ENCODE measurements at regions of chr6 and their contacts with region 1.

Region 1: DNA sequence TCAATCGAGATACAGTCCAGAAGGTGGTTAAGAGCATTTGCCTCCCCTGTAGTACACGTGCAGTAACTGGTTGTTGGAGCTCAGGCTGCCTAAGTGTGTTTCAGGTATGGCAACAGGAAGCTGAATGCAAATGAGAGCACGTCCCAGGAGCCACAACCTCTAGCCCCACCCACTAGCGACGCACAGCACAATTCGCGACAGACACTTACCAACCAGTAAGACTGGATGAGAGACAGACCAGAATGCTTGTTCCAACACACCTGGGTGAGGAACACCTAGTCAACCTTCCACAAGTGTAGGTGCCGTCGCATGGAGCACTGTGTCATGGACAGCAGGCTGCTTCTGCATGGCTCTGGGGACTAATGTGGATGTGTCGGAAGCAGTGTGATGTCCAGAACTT is 7.2 kb upstream of the SERPINB1 start:
- DNase-seq: peak; percentile 79
- H3K4me3 Mint-ChIP-seq: peak overlapping the region; percentile 28
- H3K27ac Mint-ChIP-seq: peak overlapping the region; percentile 84
- H3K4me1 Mint-ChIP-seq: peaks cover 50% of the 10 kb centered on the region
- H3K27me3 Mint-ChIP-seq: no peaks in the 10 kb centered on the region

Region 2: GRCh38 chr6:2866181-2866846 is 17.5 kb after region 1 on chr6:
- CTCF ChIA-PET with region 1: interaction called, 11 read pairs
- POLR2A ChIA-PET with region 1: no interaction called
- DNase-seq: no peak
- H3K4me3 Mint-ChIP-seq: no peak overlapping the region
- H3K27ac Mint-ChIP-seq: no peak overlapping the region
- H3K4me1 Mint-ChIP-seq: peaks cover 61% of the 10 kb centered on the region
- H3K27me3 Mint-ChIP-seq: no peaks in the 10 kb centered on the region

Region 3: DNA sequence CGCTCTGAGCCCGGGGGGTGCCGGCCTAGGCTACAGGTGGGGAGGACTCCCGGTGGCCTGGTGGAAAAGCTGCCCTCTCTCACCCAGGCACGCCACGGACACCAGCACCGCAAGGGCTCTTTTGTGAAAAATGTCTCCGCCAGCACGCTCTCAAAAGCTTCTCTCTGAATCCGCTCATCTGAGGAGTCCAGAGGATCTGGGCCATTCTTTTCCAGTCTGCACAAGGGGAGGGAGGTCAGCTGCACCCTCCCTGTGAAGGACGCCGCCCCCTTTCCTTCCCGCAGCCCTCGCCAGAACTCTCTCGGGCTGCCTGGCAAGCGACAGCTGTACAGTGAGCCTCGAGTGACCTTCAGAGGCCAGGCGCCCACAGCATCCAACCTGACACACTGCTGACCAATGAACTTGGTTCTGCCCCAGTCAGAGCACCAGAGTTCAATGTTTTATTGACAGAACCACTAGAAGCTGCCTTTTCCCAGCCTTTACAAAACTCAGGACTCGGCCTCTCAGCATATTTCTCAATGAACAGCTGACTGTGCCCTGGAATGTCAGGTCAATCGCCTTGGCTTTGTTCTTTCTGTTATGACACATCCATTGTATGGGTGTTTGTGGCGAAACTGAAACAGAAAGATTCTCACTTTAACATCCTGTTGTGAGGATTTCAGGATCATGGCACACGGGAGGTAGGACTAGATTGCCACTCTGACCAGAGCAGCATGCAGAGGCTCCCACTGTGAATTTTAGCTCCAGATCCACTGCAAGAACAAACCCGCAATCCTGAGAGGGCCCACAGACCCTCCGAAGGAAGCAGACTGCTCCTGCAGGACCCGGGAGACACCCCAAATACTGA is 27.6 kb after region 1 on chr6:
- CTCF ChIA-PET with region 1: interaction called, 10 read pairs
- POLR2A ChIA-PET with region 1: interaction called, 4 read pairs
- DNase-seq: no peak
- H3K4me3 Mint-ChIP-seq: peak overlapping the region; percentile 75
- H3K27ac Mint-ChIP-seq: peak overlapping the region; percentile 96
- H3K4me1 Mint-ChIP-seq: peaks cover 77% of the 10 kb centered on the region
- H3K27me3 Mint-ChIP-seq: no peaks in the 10 kb centered on the region

Region 4: DNA sequence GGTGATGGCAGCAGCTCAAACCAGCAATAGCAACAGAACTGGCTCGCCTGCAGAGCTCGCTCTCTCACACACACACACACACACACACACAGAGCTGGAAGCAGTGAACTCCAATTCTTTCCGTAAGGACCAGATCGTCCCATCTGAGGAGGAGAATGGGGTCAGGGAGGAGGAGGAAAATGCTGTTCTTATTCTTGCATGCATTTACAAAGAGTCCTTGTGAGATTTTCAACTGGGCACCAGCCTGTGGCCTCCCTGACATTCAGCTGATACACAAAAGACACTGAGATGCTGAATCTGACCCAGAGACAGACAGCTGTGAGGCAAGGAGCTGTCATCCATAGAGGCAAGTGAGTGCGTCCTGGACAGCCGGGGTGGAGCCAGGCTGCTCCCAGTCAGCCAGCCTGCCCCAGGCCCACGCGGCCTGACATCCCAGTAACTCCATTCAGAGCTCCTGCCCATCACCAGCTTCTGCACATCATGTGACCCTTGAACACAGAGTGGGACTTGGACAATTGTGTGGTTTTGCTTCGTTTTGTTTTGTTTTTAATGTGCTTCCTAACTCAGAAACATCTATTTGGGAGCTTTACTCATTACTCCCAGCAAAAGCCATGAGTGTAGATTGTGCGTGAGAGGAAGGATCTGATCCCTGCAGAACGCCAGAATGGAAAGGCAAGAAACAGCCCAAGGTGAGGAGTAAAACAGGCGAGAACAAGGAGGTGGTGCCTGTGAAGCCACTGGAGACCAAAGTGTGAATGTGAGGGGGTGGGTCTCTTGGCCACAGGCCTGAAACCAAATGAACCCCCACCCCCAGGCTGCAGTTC is 52.2 kb after region 1 on chr6:
- CTCF ChIA-PET with region 1: interaction called, 13 read pairs
- POLR2A ChIA-PET with region 1: no interaction called
- DNase-seq: no peak
- H3K4me3 Mint-ChIP-seq: peak overlapping the region; percentile 99
- H3K27ac Mint-ChIP-seq: peak overlapping the region; percentile 64
- H3K4me1 Mint-ChIP-seq: peaks cover 59% of the 10 kb centered on the region
- H3K27me3 Mint-ChIP-seq: peaks cover 2% of the 10 kb centered on the region

Region 5: GRCh38 chr6:2911171-2911570 is 62.3 kb after region 1 on chr6:
- CTCF ChIA-PET with region 1: interaction called, 10 read pairs
- POLR2A ChIA-PET with region 1: no interaction called
- DNase-seq: no peak
- H3K4me3 Mint-ChIP-seq: no peak overlapping the region
- H3K27ac Mint-ChIP-seq: no peak overlapping the region
- H3K4me1 Mint-ChIP-seq: peaks cover 39% of the 10 kb centered on the region
- H3K27me3 Mint-ChIP-seq: no peaks in the 10 kb centered on the region

Region 6: DNA sequence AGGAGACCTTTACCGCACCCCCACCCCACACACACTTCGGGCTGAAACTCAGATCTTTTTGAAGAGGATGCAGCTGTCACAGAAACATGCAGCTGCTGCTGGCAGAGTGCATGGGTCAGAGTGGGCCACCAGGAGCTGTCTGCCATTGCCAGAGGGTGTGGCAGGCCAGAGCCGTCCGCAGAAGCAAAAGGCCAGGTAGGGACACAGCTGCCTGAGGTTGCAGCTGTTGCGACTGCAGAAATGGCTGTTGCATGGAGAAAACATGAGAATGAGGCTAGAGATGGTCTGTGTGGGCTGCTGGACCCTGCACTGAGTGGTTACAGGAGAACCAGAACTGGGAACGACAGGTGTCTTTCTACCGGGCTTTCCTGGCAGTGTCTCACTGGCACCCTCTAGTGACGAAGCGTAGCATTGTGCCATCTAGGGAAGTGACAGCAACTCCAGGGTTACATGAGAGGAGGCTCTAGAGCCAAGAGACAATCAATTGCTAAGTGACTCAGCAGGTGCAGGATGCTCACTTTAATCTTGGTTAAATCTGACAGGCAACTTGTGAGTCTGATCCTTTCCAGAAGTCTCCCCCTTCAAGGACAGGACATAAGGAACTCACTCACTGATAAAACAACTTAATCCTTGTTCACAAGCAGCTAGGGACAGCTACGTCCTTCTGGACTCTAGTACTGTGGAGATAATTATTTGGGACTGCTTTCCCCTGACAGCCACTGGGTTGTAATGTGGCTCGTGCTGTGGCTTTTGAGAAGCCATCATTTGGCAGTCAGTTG is 83.3 kb after region 1 on chr6:
- CTCF ChIA-PET with region 1: interaction called, 29 read pairs
- POLR2A ChIA-PET with region 1: interaction called, 5 read pairs
- DNase-seq: peak; percentile 90
- H3K4me3 Mint-ChIP-seq: no peak overlapping the region
- H3K27ac Mint-ChIP-seq: peak overlapping the region; percentile 48
- H3K4me1 Mint-ChIP-seq: peaks cover 24% of the 10 kb centered on the region
- H3K27me3 Mint-ChIP-seq: no peaks in the 10 kb centered on the region

Region 7: DNA sequence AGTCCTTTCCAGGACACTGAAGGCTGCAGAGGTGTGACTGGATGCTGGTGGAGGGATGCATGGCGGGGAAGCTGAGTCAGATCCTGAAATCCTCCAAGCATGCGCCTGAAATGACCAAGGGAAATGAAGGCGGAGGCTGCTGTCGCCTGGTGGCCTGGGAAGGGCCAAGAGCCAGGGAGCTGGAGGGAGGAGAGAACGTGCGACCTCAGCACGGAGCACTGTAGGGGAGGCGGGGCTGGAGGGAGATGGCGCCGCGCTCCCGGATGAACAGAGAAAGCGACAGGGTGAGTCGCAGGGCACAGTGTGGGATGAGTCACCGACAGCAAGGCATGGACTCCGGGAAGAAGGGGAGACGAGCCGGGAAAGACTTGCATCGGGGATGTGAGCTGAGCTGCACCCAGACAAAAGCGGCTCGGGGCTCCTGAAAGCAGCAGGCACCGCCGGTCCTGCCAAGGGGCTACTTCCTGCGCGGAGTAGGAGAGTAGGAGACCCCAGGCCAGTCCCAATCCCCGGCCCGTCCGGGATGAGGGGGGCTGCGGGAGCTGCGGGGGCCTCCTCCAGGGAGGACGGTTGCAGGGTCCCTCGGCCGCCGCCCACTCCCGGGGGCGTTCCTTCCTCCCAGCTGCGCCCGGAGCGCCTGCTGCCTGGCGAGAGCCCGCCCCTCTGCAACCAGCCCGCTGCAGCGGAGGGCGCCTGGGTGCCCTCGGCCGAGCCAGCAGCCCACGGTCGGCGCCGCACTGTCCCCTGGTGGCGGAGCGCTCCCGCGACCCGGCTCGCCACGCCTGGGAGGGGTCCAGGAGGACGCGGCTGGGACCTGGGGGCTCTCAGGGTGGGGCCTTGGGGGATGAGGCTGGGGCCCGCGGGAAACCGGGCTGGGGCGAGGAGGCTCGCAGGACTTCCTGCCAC is 139.8 kb after region 1 on chr6:
- CTCF ChIA-PET with region 1: interaction called, 56 read pairs
- POLR2A ChIA-PET with region 1: interaction called, 6 read pairs
- DNase-seq: peak; percentile 76
- H3K4me3 Mint-ChIP-seq: peak overlapping the region; percentile 87
- H3K27ac Mint-ChIP-seq: peak overlapping the region; percentile 98
- H3K4me1 Mint-ChIP-seq: peaks cover 27% of the 10 kb centered on the region
- H3K27me3 Mint-ChIP-seq: peaks cover 3% of the 10 kb centered on the region

Region 8: DNA sequence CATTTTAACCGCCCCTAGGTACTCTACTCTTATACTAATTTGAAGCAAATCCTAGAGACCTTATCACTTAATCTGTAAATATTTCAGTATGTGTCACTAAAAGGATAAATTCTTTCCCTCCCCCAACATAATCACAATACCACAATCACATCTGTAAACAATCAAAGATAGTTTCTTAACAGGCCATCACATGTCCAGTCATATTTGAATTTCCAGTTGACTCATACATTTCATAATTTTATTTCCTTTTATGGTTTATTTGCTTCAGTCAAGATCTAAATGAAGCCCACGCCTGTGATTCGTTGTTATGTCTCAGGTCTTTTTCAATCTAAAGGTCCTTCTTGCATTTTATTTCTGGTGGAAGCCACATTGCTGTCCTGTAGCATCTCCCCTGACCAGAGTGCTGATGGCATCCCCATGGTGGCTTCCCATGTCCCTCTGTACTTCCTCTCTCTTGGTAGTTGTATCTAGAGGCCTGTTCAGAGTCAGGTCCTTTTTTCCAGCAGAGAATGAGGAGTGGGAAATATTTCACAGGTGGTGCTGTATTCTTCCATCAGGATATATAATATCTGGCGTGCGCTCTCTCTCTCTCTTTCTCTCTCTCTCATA is 736.6 kb after region 1 on chr6:
- CTCF ChIA-PET with region 1: no interaction called
- POLR2A ChIA-PET with region 1: no interaction called
- DNase-seq: no peak
- H3K4me3 Mint-ChIP-seq: no peak overlapping the region
- H3K27ac Mint-ChIP-seq: no peak overlapping the region
- H3K4me1 Mint-ChIP-seq: no peaks in the 10 kb centered on the region
- H3K27me3 Mint-ChIP-seq: peaks cover 26% of the 10 kb centered on the region